Uterus (tissue), 4 donors: ENCODE measurements at regions of chr3 and their contacts with region 1.

Region 1: DNA sequence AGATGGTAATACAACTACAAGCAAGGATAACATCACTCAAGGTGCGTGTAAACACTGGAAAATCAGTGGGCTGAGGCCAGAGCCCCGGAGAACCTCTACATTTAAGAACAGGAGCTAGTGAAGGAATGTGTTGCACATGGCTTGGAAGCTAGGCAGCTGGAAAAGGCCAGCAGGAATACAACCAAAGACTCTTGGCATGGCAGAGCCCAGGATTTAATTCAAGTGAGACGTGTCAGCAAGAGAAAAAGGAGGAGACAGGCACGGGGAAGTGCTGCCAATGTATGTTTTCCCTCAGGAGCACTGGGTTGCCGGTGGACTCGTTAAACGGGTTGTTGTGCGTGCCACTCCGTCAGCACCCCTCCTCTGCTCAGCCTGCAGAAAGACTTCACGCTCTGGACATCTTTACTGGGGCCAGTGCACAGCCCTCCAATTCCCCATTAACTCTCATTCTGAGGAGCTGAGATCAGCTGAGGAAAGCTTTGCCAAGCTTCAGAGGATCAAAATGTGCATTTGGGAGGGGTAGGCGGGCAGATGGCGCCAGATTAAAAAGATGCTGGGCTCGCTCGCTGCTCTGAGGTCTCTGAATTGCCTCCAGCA is 103.8 kb downstream of the PDZRN3 start:
- DNase-seq: peak; percentile 74 to 86
- H3K4me3 ChIP-seq: peak overlapping the region in 1 of 2 donors; percentile 6
- H3K27ac ChIP-seq: peak overlapping the region; percentile 77 to 93
- H3K4me1 ChIP-seq: peaks cover 7 to 17% of the 10 kb centered on the region in 2 donors
- H3K27me3 ChIP-seq: no peaks in the 10 kb centered on the region
- CTCF ChIP-seq: no peak
- POLR2A ChIP-seq: no peak

Region 2: GRCh38 chr3:73365756-73366397 is 155.1 kb before region 1 on chr3:
- intact Hi-C with region 1: no loop called
- DNase-seq: peak; percentile 87 to 90
- H3K4me3 ChIP-seq: no peak overlapping the region
- H3K27ac ChIP-seq: peak overlapping the region; percentile 48 to 62
- H3K4me1 ChIP-seq: peaks cover 0 to 8% of the 10 kb centered on the region in 2 donors
- H3K27me3 ChIP-seq: no peaks in the 10 kb centered on the region
- CTCF ChIP-seq: no peak
- POLR2A ChIP-seq: no peak

Region 3: DNA sequence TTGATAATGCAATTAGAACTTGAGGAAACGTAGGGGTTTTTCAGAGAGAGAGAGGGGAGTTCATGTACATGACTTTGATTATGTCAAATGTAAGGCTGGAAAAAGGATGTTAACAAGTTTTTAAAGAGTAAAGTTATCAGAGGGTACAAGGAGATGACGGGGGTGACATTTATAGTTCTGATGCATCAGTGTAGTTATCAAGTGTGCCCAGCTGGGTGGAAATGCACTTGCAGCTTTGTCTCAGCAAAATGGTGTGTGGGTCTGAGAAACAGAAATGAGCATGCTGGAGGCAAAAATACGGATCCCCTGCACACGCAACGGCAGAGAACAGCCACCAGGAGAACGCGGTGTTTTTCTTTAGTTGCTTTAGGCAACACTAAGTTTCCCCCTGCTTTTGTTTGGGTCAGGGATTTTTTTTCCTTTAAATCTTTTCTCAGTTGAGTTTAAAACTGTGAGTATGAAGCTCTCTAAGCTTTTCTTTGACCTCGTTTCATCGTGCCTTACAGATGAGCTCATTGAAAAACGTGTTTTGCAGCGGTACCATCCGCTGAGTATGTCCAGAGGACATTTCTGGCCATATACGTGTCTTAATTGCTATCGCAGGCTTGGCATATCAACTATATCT is 101.7 kb before region 1 on chr3:
- intact Hi-C with region 1: no loop called
- DNase-seq: no peak
- H3K4me3 ChIP-seq: no peak overlapping the region
- H3K27ac ChIP-seq: peak overlapping the region; percentile 73 to 86
- H3K4me1 ChIP-seq: peaks cover 14 to 19% of the 10 kb centered on the region in 2 donors
- H3K27me3 ChIP-seq: no peaks in the 10 kb centered on the region
- CTCF ChIP-seq: peak in 2 of 4 experiments; percentile 41 to 52
- POLR2A ChIP-seq: no peak

Region 4: DNA sequence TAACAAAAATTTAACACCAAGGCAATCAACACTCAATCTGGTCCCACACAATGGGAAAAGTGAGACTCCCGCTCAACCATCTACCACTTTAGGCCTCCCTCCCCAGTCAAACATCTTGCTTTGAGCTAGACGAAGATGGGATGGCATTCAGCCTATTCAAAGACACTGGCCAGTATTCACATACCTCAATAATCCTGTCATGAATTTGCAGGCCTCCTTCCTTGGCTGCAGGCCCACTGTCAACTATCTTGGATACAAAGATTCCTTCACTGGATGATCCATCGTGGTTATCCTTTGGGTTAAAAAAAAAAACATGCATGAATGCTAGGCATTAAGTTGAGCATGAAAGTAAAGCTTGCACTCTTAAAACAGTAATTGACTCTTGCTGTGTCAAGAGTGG is 81.2 kb after region 1 on chr3:
- intact Hi-C with region 1: loop called (anchors 10 kb)
- DNase-seq: no peak
- H3K4me3 ChIP-seq: no peak overlapping the region
- H3K27ac ChIP-seq: peak overlapping the region; percentile 56 to 72
- H3K4me1 ChIP-seq: peaks cover 16 to 44% of the 10 kb centered on the region in 2 donors
- H3K27me3 ChIP-seq: no peaks in the 10 kb centered on the region
- CTCF ChIP-seq: no peak
- POLR2A ChIP-seq: no peak

Region 5: DNA sequence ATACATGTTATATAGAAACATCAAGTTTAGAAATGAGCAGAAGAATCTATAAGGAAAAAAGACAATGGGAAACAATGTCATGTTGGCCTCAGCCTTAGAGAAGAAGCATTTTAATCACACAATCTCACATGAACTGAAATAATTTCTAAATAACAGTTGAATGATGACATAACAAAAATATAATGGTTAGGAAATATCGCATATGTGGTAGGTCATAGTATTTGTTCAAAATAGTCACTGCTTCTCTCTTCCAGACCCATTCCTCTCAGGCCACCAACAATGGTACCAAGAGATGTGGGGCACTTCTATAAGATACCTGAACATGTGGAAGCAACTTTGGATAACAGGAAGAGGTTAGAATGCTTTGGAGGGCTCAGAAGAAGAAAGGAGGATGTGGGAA is 299.5 kb after region 1 on chr3:
- intact Hi-C with region 1: no loop called
- DNase-seq: no peak
- H3K4me3 ChIP-seq: no peak overlapping the region
- H3K27ac ChIP-seq: no peak overlapping the region
- H3K4me1 ChIP-seq: no peaks in the 10 kb centered on the region
- H3K27me3 ChIP-seq: no peaks in the 10 kb centered on the region
- CTCF ChIP-seq: no peak
- POLR2A ChIP-seq: no peak

Region 6: GRCh38 chr3:73832426-73832825 is 311.5 kb after region 1 on chr3:
- intact Hi-C with region 1: loop called (anchors 5 kb)
- DNase-seq: peak; percentile 45 to 69
- H3K4me3 ChIP-seq: no peak overlapping the region
- H3K27ac ChIP-seq: peak overlapping the region; percentile 38 to 56
- H3K4me1 ChIP-seq: peaks cover 0 to 5% of the 10 kb centered on the region in 2 donors
- H3K27me3 ChIP-seq: no peaks in the 10 kb centered on the region
- CTCF ChIP-seq: no peak
- POLR2A ChIP-seq: no peak